Prostate gland (tissue), 2 donors: ENCODE measurements at regions of chr18 and their contacts with region 1.

Region 1: DNA sequence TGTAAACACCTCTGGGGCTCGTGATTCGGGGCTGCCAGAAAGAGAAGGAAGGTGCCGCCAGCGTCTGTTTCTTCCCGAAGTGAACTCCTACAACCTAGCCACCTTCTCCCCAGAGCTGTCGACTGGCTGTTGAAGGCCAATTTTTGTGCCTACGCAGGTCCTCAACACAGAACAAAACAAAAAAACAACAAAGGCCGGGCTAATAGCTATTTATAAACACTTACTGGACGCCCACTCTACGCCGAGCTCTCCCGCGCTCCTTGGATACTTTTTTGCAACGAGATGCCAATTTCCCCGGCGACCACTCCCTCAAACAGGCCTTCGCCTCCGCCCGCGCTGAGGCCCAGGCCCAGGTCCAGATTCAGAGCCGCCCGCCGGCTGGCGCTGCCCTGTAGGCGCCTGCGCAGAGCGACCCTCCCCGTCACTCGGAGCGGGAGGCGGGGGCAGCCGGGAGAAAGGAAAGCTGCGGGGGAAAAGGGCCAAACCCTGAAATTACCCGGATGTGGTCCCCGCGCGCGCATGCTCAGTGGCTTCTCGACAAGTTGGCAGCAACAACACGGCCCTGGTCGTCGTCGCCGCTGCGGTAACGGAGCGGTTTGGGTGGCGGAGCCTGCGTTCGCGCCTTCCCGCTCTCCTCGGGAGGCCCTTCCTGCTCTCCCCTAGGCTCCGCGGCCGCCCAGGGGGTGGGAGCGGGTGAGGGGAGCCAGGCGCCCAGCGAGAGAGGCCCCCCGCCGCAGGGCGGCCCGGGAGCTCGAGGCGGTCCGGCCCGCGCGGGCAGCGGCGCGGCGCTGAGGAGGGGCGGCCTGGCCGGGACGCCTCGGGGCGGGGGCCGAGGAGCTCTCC is at the start of gene SMAD4:
- DNase-seq: peak; percentile 94
- H3K4me3 ChIP-seq: peak within 1 kb of the TSS; percentile 61 to 91
- H3K27ac ChIP-seq: peak within 1 kb of the TSS; percentile 99 to 100
- H3K4me1 ChIP-seq: peaks cover 9% of the 10 kb centered on the region
- H3K27me3 ChIP-seq: no peaks in the 10 kb centered on the region
- CTCF ChIP-seq: peak in 2 of 4 experiments; percentile 14 to 18
- POLR2A ChIP-seq: peak; percentile 90
- total RNA-seq, gene SMAD4: 214 to 225 TPM

Region 2: GRCh38 chr18:50967714-50968661 is 61.9 kb before region 1 on chr18 and contains the start of gene ELAC1:
- intact Hi-C with region 1: loop called (anchors 2 kb)
- DNase-seq: peak; percentile 62
- H3K4me3 ChIP-seq: peak within 1 kb of the TSS; percentile 91 to 93
- H3K27ac ChIP-seq: peak within 1 kb of the TSS; percentile 96 to 98
- H3K4me1 ChIP-seq: peaks cover 5% of the 10 kb centered on the region
- H3K27me3 ChIP-seq: no peaks in the 10 kb centered on the region
- CTCF ChIP-seq: peak in 2 of 4 experiments; percentile 4 to 17
- POLR2A ChIP-seq: peak; percentile 71
- total RNA-seq, gene ELAC1: 7.1 to 16.0 TPM

Region 3: DNA sequence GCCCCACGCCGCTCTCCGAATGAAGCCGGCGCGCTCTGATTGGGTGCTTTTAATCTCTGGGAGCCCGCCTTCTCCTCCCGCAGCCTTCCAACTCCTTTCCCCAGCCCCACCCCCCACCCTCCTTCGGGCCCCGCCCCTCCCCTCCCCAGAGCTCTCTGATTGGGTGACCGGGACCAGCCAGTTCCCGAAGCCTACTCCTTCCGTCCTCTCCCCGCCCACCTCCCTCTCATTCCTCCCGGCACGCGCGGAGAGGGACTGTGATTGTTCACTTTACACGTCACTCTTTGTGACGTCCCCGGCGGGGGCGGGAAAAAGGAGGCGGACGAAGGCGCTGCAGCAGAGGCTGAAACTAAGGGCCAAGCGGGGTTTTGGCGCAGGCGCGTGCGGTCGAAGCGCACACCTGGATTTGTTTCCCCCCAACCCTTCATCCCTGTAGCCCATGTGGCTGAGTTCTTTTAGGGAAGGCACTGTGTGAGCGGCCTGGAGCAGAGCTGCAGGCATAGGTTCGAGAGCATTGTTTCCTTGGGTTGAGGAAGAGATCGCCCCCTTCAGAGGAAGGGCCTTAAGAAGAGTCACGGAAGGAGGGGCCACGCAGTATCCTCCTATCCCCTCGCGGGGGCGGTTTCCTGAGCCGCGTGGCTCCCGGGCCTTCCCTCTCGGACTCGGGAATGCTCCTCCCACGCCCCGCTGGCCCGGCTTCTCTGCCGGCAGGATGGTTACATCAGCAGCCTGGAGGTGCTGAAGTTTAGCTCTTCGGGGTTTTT is 167.9 kb after region 1 on chr18 and contains the start of gene MEX3C:
- intact Hi-C with region 1: loop called (anchors 2 kb)
- DNase-seq: peak; percentile 99
- H3K4me3 ChIP-seq: peak within 1 kb of the TSS; percentile 81
- H3K27ac ChIP-seq: peak within 1 kb of the TSS; percentile 94 to 97
- H3K4me1 ChIP-seq: peaks cover 8% of the 10 kb centered on the region
- H3K27me3 ChIP-seq: no peaks in the 10 kb centered on the region
- CTCF ChIP-seq: peak in 2 of 4 experiments; percentile 49 to 50
- POLR2A ChIP-seq: peak; percentile 84
- total RNA-seq, gene MEX3C: 29.2 to 54.0 TPM